B cell (primary cell): ENCODE measurements at regions of chr6 and their contacts with region 1.

Region 1: GRCh38 chr6:4135665-4136353 is 434 bp upstream of the ECI2 start:
- DNase-seq: peak; percentile 91
- ATAC-seq: peak; percentile 92
- H3K4me3 ChIP-seq: peak overlapping the region; percentile 70 to 85 (median 72)
- H3K4me3 Mint-ChIP-seq: peak overlapping the region; percentile 90
- H3K27ac ChIP-seq: peak overlapping the region; percentile 37 to 57
- H3K27ac Mint-ChIP-seq: peak overlapping the region; percentile 85
- H3K4me1 ChIP-seq: peaks cover 15 to 21% of the 10 kb centered on the region in 2 donors
- H3K4me1 Mint-ChIP-seq: peaks cover 23% of the 10 kb centered on the region
- H3K27me3 ChIP-seq: no peaks in the 10 kb centered on the region
- H3K27me3 Mint-ChIP-seq: no peaks in the 10 kb centered on the region
- CTCF ChIP-seq: no peak

Region 2: GRCh38 chr6:3068329-3069214 is 1067.2 kb before region 1 on chr6 and contains the start of gene RIPK1:
- CTCF ChIA-PET with region 1: no interaction called
- POLR2A ChIA-PET with region 1: no interaction called
- intact Hi-C with region 1: loop called (anchors 5 kb)
- DNase-seq: peak; percentile 95
- ATAC-seq: peak; percentile 73
- H3K4me3 ChIP-seq: peak within 1 kb of the TSS; percentile 55 to 87 (median 85)
- H3K4me3 Mint-ChIP-seq: peak within 1 kb of the TSS; percentile 98
- H3K27ac ChIP-seq: peak within 1 kb of the TSS; percentile 92 to 99
- H3K27ac Mint-ChIP-seq: peak within 1 kb of the TSS; percentile 99
- H3K4me1 ChIP-seq: peaks cover 17 to 23% of the 10 kb centered on the region in 2 donors
- H3K4me1 Mint-ChIP-seq: peaks cover 43% of the 10 kb centered on the region
- H3K27me3 ChIP-seq: no peaks in the 10 kb centered on the region
- H3K27me3 Mint-ChIP-seq: no peaks in the 10 kb centered on the region
- CTCF ChIP-seq: no peak
- total RNA-seq, gene RIPK1: 26.2 and 28.1 TPM in 2 replicates

Region 3: DNA sequence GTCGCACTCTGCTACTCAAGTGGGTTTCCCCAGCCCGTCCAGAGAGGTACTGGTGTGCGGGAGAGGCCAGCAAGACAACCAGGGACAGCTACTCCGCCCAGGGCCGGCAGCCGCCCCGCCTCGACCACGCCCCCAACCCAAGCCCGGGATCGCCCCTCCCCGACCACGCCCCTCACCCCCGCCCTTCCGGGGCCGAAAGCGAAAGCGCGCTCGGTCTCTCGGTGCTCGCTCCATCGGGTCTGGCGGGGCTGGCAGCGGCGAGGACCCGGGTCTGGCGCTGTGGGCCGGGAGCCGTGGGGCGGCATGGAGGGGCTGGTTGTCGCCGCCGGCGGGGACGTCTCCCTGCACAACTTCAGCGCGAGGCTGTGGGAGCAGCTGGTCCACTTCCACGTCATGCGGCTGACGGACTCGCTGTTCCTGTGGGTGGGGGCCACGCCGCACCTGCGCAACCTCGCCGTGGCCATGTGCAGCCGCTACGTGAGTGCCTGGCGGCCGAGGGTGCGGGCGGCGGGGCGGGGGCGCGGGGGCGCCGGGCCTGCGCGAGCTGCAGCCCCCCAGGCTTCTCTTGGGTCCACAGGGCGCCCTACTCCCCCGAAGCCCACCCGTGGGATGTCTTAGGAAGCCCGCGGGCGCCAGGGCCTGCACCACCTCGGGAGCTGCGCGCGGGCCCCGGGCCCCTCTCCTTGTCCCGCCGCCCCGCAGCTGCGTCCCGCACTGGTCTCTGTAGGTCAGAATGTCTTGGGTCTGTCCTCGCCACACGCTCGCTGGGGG is 876.9 kb before region 1 on chr6 and contains the start of gene PSMG4:
- CTCF ChIA-PET with region 1: no interaction called
- POLR2A ChIA-PET with region 1: no interaction called
- intact Hi-C with region 1: loop called (anchors 10 kb)
- DNase-seq: peak; percentile 92
- ATAC-seq: peak; percentile 92
- H3K4me3 ChIP-seq: peak within 1 kb of the TSS; percentile 65 to 86 (median 78)
- H3K4me3 Mint-ChIP-seq: peak within 1 kb of the TSS; percentile 97
- H3K27ac ChIP-seq: peak within 1 kb of the TSS; percentile 12 to 65
- H3K27ac Mint-ChIP-seq: peak within 1 kb of the TSS; percentile 91
- H3K4me1 ChIP-seq: peaks cover 20 to 34% of the 10 kb centered on the region in 2 donors
- H3K4me1 Mint-ChIP-seq: peaks cover 35% of the 10 kb centered on the region
- H3K27me3 ChIP-seq: no peaks in the 10 kb centered on the region
- H3K27me3 Mint-ChIP-seq: peaks cover 3% of the 10 kb centered on the region
- CTCF ChIP-seq: no peak
- total RNA-seq, gene PSMG4: 31.8 and 31.9 TPM in 2 replicates

Region 4: DNA sequence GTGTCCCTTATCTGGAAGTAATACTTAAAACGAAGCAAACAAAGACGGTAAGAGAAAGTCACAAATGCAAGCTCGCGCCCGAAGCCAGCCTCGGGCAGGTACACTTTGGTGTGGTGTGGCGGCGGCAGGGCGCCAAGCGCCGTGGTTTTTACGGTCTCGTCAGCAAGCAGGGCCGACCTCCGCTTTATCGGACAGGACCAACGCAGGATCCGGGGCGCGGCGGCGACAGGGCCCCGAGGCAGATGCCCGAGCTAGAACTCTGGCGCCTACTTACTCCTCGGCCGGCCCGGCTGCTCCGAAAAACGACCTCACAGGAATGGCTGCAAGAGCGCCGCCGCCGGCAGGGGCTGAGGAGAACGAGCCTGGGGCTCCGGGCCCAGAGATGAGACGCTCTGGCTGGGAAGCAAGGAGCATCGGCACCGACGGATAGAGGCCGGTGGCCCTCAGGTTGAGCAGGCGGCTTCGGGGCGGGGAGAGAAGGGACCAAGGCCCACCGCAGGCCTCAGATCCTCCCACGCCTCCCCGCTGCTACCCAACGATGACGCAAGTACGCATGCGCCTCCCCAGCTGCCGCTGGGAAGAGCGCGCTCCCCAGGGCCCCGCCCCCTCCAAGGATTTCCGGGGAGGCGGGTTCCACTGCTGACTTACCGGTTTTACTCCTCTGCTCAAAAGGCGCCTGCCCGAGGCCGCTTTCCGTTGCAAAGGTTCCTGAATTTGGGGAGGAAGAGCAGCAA is 117.5 kb before region 1 on chr6:
- CTCF ChIA-PET with region 1: interaction called, 3 read pairs
- POLR2A ChIA-PET with region 1: interaction called, 15 read pairs
- intact Hi-C with region 1: loop called (anchors 1 kb)
- DNase-seq: peak; percentile 98
- ATAC-seq: peak; percentile 73
- H3K4me3 ChIP-seq: peak overlapping the region; percentile 71 to 91 (median 80)
- H3K4me3 Mint-ChIP-seq: peak overlapping the region; percentile 96
- H3K27ac ChIP-seq: peak overlapping the region; percentile 94 to 97
- H3K27ac Mint-ChIP-seq: peak overlapping the region; percentile 99
- H3K4me1 ChIP-seq: peaks cover 30 to 40% of the 10 kb centered on the region in 2 donors
- H3K4me1 Mint-ChIP-seq: peaks cover 70% of the 10 kb centered on the region
- H3K27me3 ChIP-seq: no peaks in the 10 kb centered on the region
- H3K27me3 Mint-ChIP-seq: no peaks in the 10 kb centered on the region
- CTCF ChIP-seq: peak; percentile 43

Region 5: GRCh38 chr6:4775584-4776494 is 640.0 kb after region 1 on chr6 and contains the start of gene CDYL:
- CTCF ChIA-PET with region 1: no interaction called
- POLR2A ChIA-PET with region 1: no interaction called
- intact Hi-C with region 1: loop called (anchors 5 kb)
- DNase-seq: peak; percentile 94
- ATAC-seq: peak; percentile 74
- H3K4me3 ChIP-seq: peak within 1 kb of the TSS; percentile 51 to 83 (median 72)
- H3K4me3 Mint-ChIP-seq: peak within 1 kb of the TSS; percentile 97
- H3K27ac ChIP-seq: peak within 1 kb of the TSS in 1 of 2 donors; percentile 69
- H3K27ac Mint-ChIP-seq: peak within 1 kb of the TSS; percentile 93
- H3K4me1 ChIP-seq: peaks cover 19 to 26% of the 10 kb centered on the region in 2 donors
- H3K4me1 Mint-ChIP-seq: peaks cover 41% of the 10 kb centered on the region
- H3K27me3 ChIP-seq: no peaks in the 10 kb centered on the region
- H3K27me3 Mint-ChIP-seq: no peaks in the 10 kb centered on the region
- CTCF ChIP-seq: no peak
- total RNA-seq, gene CDYL: 61.0 and 63.0 TPM in 2 replicates